Esophagus muscularis mucosa (tissue), 4 donors: ENCODE measurements at regions of chr22 and their contacts with region 1.

Region 1: GRCh38 chr22:34878996-34879395 is 187.0 kb upstream of the ISX start:
- DNase-seq: no peak
- H3K4me3 ChIP-seq: no peak overlapping the region
- H3K27ac ChIP-seq: no peak overlapping the region
- H3K4me1 ChIP-seq: no peaks in the 10 kb centered on the region
- H3K27me3 ChIP-seq: peaks cover 0 to 7% (median 0%) of the 10 kb centered on the region in 4 donors
- CTCF ChIP-seq: no peak
- EP300 ChIP-seq: no peak
- POLR2A ChIP-seq: no peak

Region 2: GRCh38 chr22:34722901-34723300 is 156.1 kb before region 1 on chr22:
- intact Hi-C with region 1: no loop called
- DNase-seq: peak; percentile 74
- H3K4me3 ChIP-seq: no peak overlapping the region
- H3K27ac ChIP-seq: no peak overlapping the region
- H3K4me1 ChIP-seq: no peaks in the 10 kb centered on the region
- H3K27me3 ChIP-seq: no peaks in the 10 kb centered on the region
- CTCF ChIP-seq: no peak
- EP300 ChIP-seq: no peak
- POLR2A ChIP-seq: no peak

Region 3: DNA sequence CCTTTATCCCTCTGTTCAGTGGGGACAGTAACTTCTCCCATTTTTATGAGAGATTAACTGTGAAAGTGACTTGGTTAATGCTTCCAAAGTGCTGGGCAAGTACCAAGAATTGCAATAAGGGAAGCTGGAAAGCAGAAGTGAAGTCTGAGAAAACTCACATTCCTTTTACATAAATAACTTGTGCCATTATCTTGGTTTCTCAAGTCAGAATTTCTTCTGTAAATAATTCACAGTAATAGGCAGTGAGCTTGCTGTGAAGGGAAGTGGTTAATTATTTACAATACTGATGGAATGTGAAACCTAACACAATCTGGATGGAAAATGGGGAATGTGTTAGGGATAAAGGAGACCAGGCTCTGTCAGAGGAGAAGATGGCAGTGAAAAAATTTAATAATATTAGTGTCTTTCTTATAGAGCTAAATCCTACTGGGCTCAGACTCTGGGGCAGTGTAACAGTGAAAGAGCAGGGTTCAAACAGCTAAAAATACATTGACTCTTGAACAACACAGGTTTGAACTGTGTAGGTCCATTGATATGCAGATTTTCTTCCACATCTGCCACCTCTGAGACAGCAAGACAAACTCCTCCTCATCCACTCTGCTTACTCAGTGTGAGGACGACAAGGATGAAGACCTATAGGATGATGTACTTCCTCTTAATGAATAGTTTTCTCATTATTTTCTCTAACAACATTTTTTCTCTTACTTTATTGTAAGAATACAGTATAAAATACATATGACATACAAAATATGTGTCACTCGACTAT is 64.6 kb before region 1 on chr22:
- intact Hi-C with region 1: loop called (anchors 10 kb)
- DNase-seq: no peak
- H3K4me3 ChIP-seq: no peak overlapping the region
- H3K27ac ChIP-seq: no peak overlapping the region
- H3K4me1 ChIP-seq: no peaks in the 10 kb centered on the region
- H3K27me3 ChIP-seq: peaks cover 0 to 3% (median 0%) of the 10 kb centered on the region in 4 donors
- CTCF ChIP-seq: no peak
- EP300 ChIP-seq: no peak
- POLR2A ChIP-seq: no peak

Region 4: DNA sequence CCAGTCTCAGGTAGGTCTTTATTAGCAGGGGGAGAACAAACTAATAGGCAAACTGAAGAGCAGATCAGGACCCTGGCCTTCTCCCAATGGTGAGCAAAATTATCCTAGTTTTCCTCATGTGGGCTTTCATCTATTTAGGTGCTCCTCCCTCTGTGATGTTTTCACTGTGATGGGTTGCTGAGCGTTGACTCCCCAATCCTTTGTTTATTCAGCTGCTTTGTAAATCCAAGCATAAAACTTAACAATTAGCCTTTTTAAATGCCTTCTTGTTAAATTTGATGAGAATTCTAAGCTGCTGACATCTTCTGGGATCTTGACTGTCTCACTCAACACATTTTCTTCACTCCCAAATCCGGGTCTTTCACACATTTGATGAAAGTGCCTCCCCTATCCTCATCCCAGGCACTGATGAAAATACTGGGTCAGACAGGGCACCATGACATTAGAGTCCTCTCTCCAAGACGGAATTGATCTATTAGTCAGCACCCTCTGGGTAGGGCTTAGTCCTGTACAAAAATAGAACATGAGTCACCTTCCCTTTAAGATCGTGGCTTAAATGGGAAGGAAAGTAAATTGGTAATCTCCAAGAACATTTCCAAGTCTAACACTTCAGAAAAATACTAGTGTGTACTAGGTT is 12.4 kb before region 1 on chr22:
- intact Hi-C with region 1: no loop called
- DNase-seq: peak; percentile 7
- H3K4me3 ChIP-seq: no peak overlapping the region
- H3K27ac ChIP-seq: no peak overlapping the region
- H3K4me1 ChIP-seq: no peaks in the 10 kb centered on the region
- H3K27me3 ChIP-seq: no peaks in the 10 kb centered on the region
- CTCF ChIP-seq: no peak
- EP300 ChIP-seq: no peak
- POLR2A ChIP-seq: no peak